Activated CD8-positive, alpha-beta memory T cell treated with anti-CD3 and anti-CD28 coated beads, Interleukin-2, amount 10 ng/mL, durations not matched to agents 7 days and 5 days (primary cell): ENCODE measurements at regions of chr3 and their contacts with region 1.

Region 1: DNA sequence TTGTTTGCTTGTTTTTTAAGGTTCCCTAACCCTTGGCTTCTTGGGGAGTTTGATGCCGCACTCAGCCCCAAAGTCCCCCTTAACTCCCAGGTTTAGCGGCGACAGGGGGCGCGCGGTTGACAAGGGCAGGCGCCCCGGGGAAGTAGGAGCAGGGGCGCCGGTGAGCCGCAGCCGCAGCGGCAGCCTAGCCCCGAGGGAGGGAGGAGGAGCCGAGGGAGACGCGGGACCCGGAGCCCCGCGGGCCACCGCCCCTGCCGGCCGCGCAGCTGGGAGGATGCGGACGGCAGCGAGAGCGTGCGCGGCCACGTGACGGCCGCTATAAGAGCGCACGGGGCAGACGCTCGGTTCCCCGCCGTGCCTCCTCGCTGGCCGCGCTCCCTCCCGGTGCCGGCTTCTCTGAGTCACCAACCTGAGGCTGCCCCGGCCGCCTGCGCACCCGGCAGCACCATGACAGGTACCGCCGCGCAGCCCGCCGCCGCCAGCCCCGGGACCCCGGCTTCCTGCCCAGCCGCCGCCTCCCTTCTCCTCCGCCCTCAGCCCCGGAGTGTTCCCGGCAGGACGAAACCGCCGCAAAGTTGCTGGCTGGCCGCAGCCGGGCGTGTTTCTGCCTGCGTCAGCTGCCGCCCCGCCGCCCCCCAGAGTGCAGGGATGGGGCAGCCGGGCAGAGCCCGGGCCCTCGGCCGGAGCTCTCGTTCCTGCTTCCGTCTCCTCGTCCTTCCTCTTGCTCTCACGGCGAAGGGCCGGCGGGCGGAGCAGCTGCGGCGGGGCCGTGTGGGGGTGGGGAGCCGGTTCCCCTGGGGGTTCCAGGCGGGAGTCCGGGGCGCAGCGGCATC is at the start of gene GYG1:
- DNase-seq: peak; percentile 82
- ATAC-seq: peak; percentile 88
- H3K4me3 Mint-ChIP-seq: peak within 1 kb of the TSS; percentile 92
- H3K27ac Mint-ChIP-seq: peak within 1 kb of the TSS; percentile 86
- H3K4me1 Mint-ChIP-seq: peaks cover 60% of the 10 kb centered on the region
- H3K27me3 Mint-ChIP-seq: no peaks in the 10 kb centered on the region
- total RNA-seq, gene GYG1: 71.3 to 74.0 TPM

Region 2: GRCh38 chr3:148962513-148962912 is 28.9 kb before region 1 on chr3:
- CTCF ChIA-PET with region 1: interaction called, 16 read pairs
- DNase-seq: no peak
- ATAC-seq: no peak
- H3K4me3 Mint-ChIP-seq: no peak overlapping the region
- H3K27ac Mint-ChIP-seq: no peak overlapping the region
- H3K4me1 Mint-ChIP-seq: peaks cover 6% of the 10 kb centered on the region
- H3K27me3 Mint-ChIP-seq: peaks cover 13% of the 10 kb centered on the region

Region 3: DNA sequence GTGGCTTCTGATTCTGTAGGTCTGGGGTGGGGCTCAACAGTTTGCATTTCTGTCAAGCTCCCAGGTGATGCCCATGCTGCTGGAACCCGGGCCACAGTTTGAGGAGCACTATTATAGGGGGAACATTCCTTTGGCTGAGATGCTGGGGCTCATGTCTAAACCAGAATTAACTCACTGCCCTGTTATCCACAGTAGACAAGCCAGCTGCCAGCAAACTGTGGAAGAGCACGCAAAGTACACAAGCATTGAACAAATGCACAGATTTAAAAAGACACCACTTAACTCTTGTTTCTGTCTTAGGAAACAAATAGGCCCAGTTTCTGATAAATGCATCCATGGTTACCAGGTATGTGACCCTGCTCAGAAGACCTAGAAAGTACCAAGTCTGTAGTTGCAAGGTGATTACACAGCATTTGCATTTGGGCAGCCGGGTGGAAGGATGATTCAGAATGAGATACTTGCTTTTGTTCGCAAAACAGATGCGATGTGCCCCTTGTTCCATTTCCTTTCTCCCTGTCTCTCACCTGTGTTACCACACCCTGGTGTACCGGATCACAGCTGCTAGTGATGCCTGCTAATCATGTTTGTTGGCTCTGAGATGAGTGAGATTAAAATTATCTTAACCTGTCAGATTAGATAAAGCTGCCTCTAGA is 12.4 kb after region 1 on chr3:
- CTCF ChIA-PET with region 1: interaction called, 31 read pairs
- DNase-seq: peak; percentile 71
- ATAC-seq: peak; percentile 67
- H3K4me3 Mint-ChIP-seq: no peak overlapping the region
- H3K27ac Mint-ChIP-seq: peak overlapping the region; percentile 41
- H3K4me1 Mint-ChIP-seq: peaks cover 69% of the 10 kb centered on the region
- H3K27me3 Mint-ChIP-seq: no peaks in the 10 kb centered on the region

Region 4: DNA sequence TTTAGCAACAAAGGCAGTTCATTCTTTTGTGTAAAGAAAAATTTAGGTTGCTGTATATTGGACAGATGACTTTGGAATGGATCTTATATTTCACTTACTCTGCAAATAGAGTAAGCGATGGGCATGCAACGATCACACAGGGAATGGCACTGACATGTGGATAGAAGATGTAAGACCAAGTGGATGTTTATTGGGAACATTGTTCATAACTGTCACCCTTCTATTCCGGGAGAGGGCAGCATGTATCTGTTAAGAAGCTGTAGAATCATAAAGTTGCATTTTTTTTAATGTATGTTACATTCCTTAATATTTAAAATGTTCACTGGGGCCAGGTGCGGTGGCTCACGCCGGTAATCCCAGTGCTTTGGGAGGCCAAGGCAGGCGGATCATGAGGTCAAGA is 179.3 kb after region 1 on chr3:
- CTCF ChIA-PET with region 1: no interaction called
- DNase-seq: no peak
- ATAC-seq: no peak
- H3K4me3 Mint-ChIP-seq: no peak overlapping the region
- H3K27ac Mint-ChIP-seq: no peak overlapping the region
- H3K4me1 Mint-ChIP-seq: peaks cover 10% of the 10 kb centered on the region
- H3K27me3 Mint-ChIP-seq: no peaks in the 10 kb centered on the region